ENCODE measurements at regions of chr6 and their contacts with region 1.

Region 1: GRCh38 chr6:73520688-73521350 is at the start of gene EEF1A1:
- DNase-seq: peak; percentile 97 to 99
- H3K4me3 ChIP-seq: peak within 1 kb of the TSS; percentile 87 to 100 (median 97)
- H3K27ac ChIP-seq: peak within 1 kb of the TSS; percentile 98
- H3K4me1 ChIP-seq: peaks cover 0 to 8% (median 4%) of the 10 kb centered on the region in 4 experiments; a peak in 3 of 7 replicates
- H3K27me3 ChIP-seq: no peaks in the 10 kb centered on the region
- CTCF ChIP-seq: no peak
- EP300 ChIP-seq: 0 out of 3 replicates have a peak, but pooled peaks of 1 of the 2 experiments have one; percentile 84
- POLR2A ChIP-seq: peak; percentile 99 to 100
- RAD21 ChIP-seq: peak; percentile 40 to 43; a peak in 3 of 4 replicates
- total RNA-seq, gene EEF1A1: 13,468 and 13,823 TPM in 2 replicates

Region 2: GRCh38 chr6:73461537-73462350 is 59.1 kb before region 1 on chr6 and contains the start of gene MTO1:
- CTCF ChIA-PET with region 1: interaction called, 3 read pairs
- POLR2A ChIA-PET with region 1: interaction called, 39 read pairs
- DNase-seq: peak in 1 of 2 experiments; percentile 77
- H3K4me3 ChIP-seq: peak within 1 kb of the TSS; percentile 66 to 98 (median 86)
- H3K27ac ChIP-seq: peak within 1 kb of the TSS; percentile 62; the same call in 1 of the 2 replicates
- H3K4me1 ChIP-seq: no peaks in the 10 kb centered on the region; a peak in 1 of 7 replicates
- H3K27me3 ChIP-seq: no peaks in the 10 kb centered on the region
- CTCF ChIP-seq: no peak
- EP300 ChIP-seq: no peak
- POLR2A ChIP-seq: peak; percentile 42 to 84
- RAD21 ChIP-seq: no peak
- total RNA-seq, gene MTO1: 29.3 and 31.6 TPM in 2 replicates

Region 3: GRCh38 chr6:73491377-73491776 is 29.4 kb before region 1 on chr6:
- CTCF ChIA-PET with region 1: no interaction called
- POLR2A ChIA-PET with region 1: interaction called, 305 read pairs
- DNase-seq: no peak
- H3K4me3 ChIP-seq: no peak overlapping the region
- H3K27ac ChIP-seq: no peak overlapping the region
- H3K4me1 ChIP-seq: no peaks in the 10 kb centered on the region
- H3K27me3 ChIP-seq: no peaks in the 10 kb centered on the region
- CTCF ChIP-seq: no peak
- EP300 ChIP-seq: no peak
- POLR2A ChIP-seq: no peak
- RAD21 ChIP-seq: no peak

Region 4: DNA sequence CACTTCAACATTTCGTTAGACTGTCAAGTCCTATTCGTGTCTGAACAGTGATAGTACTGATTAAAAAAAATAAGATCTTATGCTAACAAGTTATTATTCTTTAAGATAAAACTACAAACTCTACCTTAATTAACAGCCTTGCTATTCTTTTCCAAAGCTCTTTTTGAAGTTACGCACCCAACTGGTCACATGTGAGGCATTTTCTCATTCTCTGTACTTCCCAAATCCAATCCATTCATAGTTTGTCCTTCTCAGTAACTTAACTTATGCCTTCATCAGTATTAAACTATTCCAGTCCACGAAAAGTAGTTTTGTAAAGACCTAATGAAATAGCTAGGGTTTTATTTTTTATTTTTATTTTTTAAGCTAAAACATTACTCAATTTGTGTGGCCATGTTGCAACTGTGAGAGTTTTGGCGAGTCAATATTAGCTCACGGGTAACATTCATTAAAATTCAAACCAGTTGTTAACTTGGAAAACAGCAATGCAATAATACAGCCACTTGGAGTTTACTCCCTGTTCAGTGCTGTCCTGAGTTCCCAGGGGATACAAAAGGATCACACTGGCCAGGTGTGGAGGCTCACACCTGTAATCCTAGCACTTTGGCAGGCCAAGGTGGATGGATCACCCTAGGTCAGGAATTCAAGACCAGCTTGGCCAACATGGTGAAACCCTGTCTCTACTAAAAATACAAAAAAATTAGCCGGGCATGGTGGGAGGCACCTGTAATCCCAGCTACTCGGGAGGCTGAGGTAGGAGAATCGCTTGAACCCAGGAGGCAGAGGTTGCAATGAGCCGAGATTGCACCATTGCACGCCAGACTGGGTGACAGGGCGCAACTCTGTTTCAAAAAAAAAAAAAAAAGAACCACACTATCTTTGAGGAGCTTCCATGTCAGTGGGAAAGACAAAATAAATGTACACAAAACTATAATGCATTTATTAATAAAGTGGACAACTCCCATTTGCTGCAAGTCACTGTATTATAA is 27.9 kb after region 1 on chr6:
- CTCF ChIA-PET with region 1: interaction called, 7 read pairs
- POLR2A ChIA-PET with region 1: interaction called, 267 read pairs
- DNase-seq: no peak
- H3K4me3 ChIP-seq: no peak overlapping the region
- H3K27ac ChIP-seq: no peak overlapping the region
- H3K4me1 ChIP-seq: no peaks in the 10 kb centered on the region
- H3K27me3 ChIP-seq: no peaks in the 10 kb centered on the region
- CTCF ChIP-seq: no peak
- EP300 ChIP-seq: no peak
- POLR2A ChIP-seq: no peak
- RAD21 ChIP-seq: no peak

Region 5: GRCh38 chr6:73580247-73581149 is 59.7 kb after region 1 on chr6:
- CTCF ChIA-PET with region 1: interaction called, 9 read pairs
- POLR2A ChIA-PET with region 1: interaction called, 1,482 read pairs
- DNase-seq: peak; percentile 94
- H3K4me3 ChIP-seq: peak overlapping the region; percentile 7 to 48 (median 36); a peak in 4 of 8 replicates
- H3K27ac ChIP-seq: peak overlapping the region; percentile 97
- H3K4me1 ChIP-seq: peaks cover 21 to 36% (median 24%) of the 10 kb centered on the region in 4 experiments
- H3K27me3 ChIP-seq: no peaks in the 10 kb centered on the region
- CTCF ChIP-seq: peak; percentile 29 to 74 (median 69)
- EP300 ChIP-seq: peak; percentile 25 to 93; a peak in 2 of 3 replicates
- POLR2A ChIP-seq: 0 out of 3 replicates have a peak, but pooled peaks of 1 of the 2 experiments have one; percentile 15
- RAD21 ChIP-seq: peak in 1 of 2 experiments; percentile 45; a peak in 3 of 4 replicates

Region 6: DNA sequence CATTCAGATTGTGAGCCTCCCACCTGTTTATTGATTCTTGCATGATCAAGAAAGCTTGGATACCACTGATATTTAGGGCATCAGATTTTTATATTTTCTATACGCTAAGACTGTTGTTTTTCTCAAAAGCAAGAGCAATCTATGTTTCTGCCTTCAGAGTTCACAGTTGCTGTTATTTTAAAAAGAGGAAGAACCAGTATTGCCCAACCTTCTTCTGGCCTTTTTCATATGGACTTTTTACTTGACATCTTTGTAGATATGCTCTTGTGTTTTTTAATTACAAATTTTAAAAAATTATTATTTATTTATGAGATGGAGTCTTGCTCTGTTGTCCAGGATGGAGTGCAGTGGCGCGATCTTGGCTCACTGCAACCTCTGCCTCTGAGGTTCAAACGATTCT is 104.1 kb after region 1 on chr6:
- CTCF ChIA-PET with region 1: no interaction called
- POLR2A ChIA-PET with region 1: interaction called, 50 read pairs
- DNase-seq: no peak
- H3K4me3 ChIP-seq: no peak overlapping the region
- H3K27ac ChIP-seq: no peak overlapping the region
- H3K4me1 ChIP-seq: no peaks in the 10 kb centered on the region
- H3K27me3 ChIP-seq: no peaks in the 10 kb centered on the region
- CTCF ChIP-seq: no peak
- EP300 ChIP-seq: no peak
- POLR2A ChIP-seq: no peak
- RAD21 ChIP-seq: no peak

Region 7: DNA sequence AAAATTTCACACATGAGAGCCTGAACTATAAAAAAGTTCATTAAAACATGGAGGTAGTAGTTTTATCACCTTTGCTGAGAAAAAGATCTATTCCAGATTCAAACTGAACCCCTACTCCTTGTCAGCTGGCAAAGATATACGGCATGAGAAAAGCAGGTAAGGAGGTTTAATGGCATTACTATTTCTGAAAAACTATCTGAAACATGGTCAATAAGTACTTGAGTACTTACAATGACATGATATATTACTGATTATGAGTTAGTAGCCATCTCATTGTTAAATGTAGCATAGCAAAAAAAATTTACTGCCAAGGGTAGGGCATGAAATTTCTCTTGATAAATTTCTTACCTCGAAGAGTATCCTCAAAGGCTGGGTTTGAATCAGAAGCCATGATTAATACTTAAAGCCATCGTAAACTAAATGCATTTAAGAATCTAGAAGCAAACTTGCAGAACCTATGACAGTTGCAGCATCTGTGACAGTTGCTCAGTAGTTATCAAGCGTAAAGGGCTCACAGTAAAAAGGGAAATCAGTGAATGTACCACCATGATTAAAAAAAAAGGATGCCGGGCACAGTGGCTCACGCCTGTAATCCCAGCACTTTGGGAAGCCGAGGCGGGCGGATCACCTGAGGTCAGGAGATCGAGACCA is 124.2 kb after region 1 on chr6:
- CTCF ChIA-PET with region 1: no interaction called
- POLR2A ChIA-PET with region 1: interaction called, 32 read pairs
- DNase-seq: no peak
- H3K4me3 ChIP-seq: peak overlapping the region in 2 of 4 experiments; percentile 11 to 49; a peak in 3 of 8 replicates
- H3K27ac ChIP-seq: no peak overlapping the region
- H3K4me1 ChIP-seq: no peaks in the 10 kb centered on the region
- H3K27me3 ChIP-seq: no peaks in the 10 kb centered on the region
- CTCF ChIP-seq: no peak
- EP300 ChIP-seq: no peak
- POLR2A ChIP-seq: no peak
- RAD21 ChIP-seq: no peak

Measured in H1 (cell line).